Motor neuron (in vitro differentiated cells): ENCODE measurements at regions of chr4 and their contacts with region 1.

Region 1: DNA sequence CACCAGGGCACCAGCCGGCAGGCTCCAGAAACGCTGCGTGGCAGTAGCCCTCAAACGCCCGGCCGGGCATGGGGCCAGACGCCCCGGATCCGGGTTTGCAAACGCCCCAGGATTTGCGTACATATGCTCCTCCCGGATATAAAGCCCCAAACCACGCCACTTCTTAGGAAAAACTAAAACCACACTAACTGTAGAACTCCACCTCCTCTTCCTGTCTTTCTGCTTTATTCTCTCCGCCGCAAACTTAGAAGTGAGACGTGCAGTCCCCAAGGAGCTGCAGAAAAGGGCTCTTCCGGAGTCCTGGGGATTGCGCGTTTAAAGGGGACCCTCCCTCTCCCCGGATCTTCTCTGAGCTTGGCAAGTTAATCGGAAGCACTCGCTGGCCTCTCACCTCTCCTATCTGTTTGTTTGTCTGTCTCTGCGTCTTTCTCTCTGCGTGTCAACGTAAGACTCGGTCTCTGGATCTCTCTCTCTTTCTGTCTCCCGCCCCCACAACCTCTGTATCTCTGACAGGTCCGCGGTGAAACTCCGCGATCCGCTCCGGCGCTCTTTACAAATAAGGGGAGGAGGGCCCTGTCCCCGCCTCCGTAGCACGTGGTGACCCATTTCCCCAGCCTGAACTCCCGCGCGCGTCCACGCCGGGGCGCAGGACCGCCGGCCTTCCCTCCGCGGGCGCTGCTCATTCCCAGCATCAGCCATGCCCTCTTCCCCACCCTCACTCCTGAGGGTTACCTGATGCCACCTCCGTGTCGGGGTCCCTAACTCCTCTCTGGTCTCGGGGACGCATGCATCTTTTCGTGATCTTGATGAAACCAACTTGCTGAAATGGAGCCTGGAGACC is at the start of gene SLC39A8:
- ATAC-seq: peak; percentile 74 to 87 (median 83)
- H3K4me3 ChIP-seq: peak within 1 kb of the TSS; percentile 31 to 40 (median 39)
- H3K27ac ChIP-seq: no peak within 1 kb of the TSS
- H3K4me1 ChIP-seq: peaks cover 2 to 7% of the 10 kb centered on the region in 2 donors
- total RNA-seq, gene SLC39A8: 1.2 to 235 (median 3.0) TPM

Region 2: GRCh38 chr4:102429553-102429952 is 84.4 kb after region 1 on chr4:
- in situ Hi-C with region 1: loop called in 1 of 9 experiments (anchors 5 kb)
- ATAC-seq: peak in 2 of 8 experiments; percentile 51 to 65
- H3K4me3 ChIP-seq: no peak overlapping the region
- H3K27ac ChIP-seq: no peak overlapping the region
- H3K4me1 ChIP-seq: no peaks in the 10 kb centered on the region

Region 3: DNA sequence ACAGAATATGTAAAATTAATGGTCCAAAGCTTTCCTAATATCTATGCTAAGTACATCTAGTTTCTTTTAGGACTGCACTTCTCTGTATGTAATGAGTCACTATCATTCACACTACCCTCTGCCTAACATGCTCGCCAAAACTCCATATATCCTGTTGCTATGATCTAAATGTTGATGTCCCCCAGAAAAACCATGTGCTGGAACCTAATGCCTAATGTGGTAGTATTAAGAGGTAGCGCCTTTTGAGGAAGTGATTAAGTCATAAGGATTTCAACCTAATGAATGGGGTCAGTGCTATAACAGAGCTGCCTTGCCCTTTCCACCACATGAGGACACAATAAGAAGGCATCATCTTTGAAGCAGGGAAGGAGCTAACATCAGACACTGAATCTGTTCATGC is 121.1 kb after region 1 on chr4:
- in situ Hi-C with region 1: no loop called
- ATAC-seq: no peak
- H3K4me3 ChIP-seq: no peak overlapping the region
- H3K27ac ChIP-seq: no peak overlapping the region
- H3K4me1 ChIP-seq: no peaks in the 10 kb centered on the region

Region 4: GRCh38 chr4:102554482-102554881 is 209.3 kb after region 1 on chr4:
- in situ Hi-C with region 1: no loop called
- ATAC-seq: peak in 2 of 8 experiments; percentile 33 to 64
- H3K4me3 ChIP-seq: no peak overlapping the region
- H3K27ac ChIP-seq: no peak overlapping the region
- H3K4me1 ChIP-seq: no peaks in the 10 kb centered on the region